ENCODE measurements at regions of chr11 and their contacts with region 1.

Region 1: DNA sequence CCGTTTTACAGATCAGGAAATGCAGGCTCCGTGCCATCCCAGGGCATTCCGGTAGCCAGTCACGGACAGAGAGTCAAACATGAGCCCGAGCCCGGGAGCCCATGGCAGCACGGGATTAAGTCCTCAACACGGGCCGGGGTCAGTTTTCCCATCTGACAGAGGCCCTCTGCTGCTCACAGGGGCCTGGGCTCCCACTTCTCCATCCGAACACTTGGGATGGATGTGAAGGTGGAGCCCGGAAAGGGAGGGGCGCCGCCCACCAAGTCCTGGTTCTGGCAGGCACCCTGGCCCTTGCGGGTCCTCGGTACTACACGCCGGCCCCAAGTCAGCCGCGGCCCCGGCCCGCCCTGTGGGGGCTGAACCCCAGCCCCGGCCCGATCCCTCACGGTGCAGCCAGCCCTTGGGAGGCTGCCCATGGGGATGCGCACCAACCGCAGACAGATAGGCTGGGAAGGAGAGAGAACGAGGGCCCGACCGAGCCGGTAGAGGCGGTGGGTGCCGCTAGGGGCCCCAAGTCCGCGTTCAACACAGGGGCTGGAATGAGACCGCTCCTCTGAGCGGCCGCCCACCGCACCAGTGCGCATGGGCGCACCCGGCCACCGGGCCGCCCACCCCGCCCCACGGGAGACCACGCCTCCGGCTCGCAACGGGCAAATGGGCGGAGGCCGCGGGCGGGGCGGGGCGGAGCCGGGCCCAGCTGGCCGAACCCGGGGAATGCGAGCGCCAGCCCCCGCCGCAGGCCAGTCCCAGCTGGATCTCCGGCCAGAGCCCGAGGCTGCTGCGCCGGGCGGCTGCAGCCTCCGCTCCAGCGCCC is at the start of gene CAPN5:
- DNase-seq: peak; percentile 89 to 95
- H3K4me3 ChIP-seq: peak within 1 kb of the TSS; percentile 79 to 91
- H3K27ac ChIP-seq: peak within 1 kb of the TSS; percentile 90 to 96
- H3K4me1 ChIP-seq: peaks cover 0 to 16% (median 7%) of the 10 kb centered on the region in 4 donors
- H3K27me3 ChIP-seq: no peaks in the 10 kb centered on the region
- CTCF ChIP-seq: peak; percentile 12 to 53

Region 2: GRCh38 chr11:76782526-76783293 is 283.7 kb before region 1 on chr11:
- intact Hi-C with region 1: loop called (anchors 10 kb)
- DNase-seq: peak; percentile 91 to 94
- H3K4me3 ChIP-seq: peak overlapping the region; percentile 73 to 93
- H3K27ac ChIP-seq: peak overlapping the region; percentile 92 to 99
- H3K4me1 ChIP-seq: peaks cover 0 to 50% (median 25%) of the 10 kb centered on the region in 4 donors
- H3K27me3 ChIP-seq: no peaks in the 10 kb centered on the region
- CTCF ChIP-seq: no peak

Region 3: GRCh38 chr11:76962583-76963416 is 103.6 kb before region 1 on chr11:
- intact Hi-C with region 1: no loop called
- DNase-seq: no peak
- H3K4me3 ChIP-seq: no peak overlapping the region
- H3K27ac ChIP-seq: no peak overlapping the region
- H3K4me1 ChIP-seq: no peaks in the 10 kb centered on the region
- H3K27me3 ChIP-seq: no peaks in the 10 kb centered on the region
- CTCF ChIP-seq: no peak